Panc1 (cell line): ENCODE measurements at regions of chr7 and their contacts with region 1.

Region 1: GRCh38 chr7:90445633-90446032 is 23.8 kb upstream of the PTTG1IP2 start:
- DNase-seq: no peak
- ATAC-seq: no peak
- H3K4me3 ChIP-seq: no peak overlapping the region
- H3K27ac ChIP-seq: no peak overlapping the region
- H3K4me1 ChIP-seq: no peaks in the 10 kb centered on the region
- H3K27me3 ChIP-seq: no peaks in the 10 kb centered on the region
- CTCF ChIP-seq: no peak

Region 2: DNA sequence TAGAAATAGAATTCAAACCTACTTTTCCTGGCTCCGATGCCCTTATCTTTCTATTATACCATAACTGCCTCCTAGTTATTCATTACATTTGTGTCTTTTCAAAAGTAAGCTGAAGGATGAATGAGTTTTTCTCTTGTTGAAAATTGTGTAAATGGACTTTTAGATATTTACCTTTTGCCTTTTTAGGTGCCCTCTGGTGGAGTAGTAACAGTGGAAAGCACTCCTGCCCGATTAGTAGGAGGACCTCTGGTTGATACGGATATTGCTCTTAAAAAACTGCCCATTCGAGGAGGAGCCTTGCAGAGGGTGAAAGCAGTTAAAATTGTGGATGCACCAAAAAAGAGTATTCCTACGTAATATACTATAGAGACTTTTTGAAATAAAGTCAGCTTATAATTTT is 135.8 kb before region 1 on chr7:
- CTCF ChIA-PET with region 1: no interaction called
- POLR2A ChIA-PET with region 1: interaction called, 10 read pairs
- in situ Hi-C with region 1: no loop called
- intact Hi-C with region 1: no loop called
- DNase-seq: no peak
- ATAC-seq: no peak
- H3K4me3 ChIP-seq: no peak overlapping the region
- H3K27ac ChIP-seq: no peak overlapping the region
- H3K4me1 ChIP-seq: no peaks in the 10 kb centered on the region
- H3K27me3 ChIP-seq: no peaks in the 10 kb centered on the region
- CTCF ChIP-seq: no peak